WTC11 (cell line): ENCODE measurements at regions of chr2 and their contacts with region 1.

Region 1: DNA sequence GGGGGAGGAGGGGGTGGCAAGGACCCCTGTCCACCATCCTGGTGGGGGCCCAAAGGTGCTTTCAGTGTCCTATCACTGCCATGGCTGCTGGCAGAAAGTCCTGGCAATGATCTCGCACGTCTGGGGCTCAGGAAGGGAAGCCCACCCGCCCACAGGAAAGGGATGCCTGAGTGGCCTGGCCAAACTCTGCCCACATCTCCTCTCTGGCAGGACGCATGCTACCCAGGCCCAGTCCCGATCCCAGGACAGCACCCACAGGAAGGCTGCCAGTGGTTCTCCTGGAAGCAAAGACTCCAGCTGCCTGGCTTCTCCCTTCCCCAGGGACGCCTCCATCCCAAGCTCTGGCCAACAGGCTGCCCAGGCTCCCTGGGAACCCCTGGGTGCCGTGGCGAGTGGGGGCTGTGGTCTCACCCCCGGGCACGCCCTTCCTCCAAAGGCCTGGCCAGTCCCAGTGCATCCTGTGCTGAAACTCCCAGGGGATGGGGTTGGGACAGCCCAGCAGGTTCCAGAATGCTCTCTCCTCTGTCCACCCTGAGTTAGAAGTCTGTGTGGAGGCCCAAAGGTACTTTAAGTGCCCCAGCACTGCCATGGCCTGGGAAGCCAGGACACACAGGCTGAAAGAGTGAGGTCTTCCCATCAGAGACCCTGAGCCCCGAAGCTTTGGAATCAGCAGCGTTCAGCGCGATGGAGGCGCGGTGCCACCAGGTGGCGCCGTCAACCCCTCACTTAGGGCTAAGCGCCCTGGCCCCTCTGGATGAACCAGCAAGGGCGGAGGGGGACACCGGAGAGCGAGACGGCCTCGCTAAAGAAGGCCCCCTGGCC is 29.8 kb upstream of the TAF1B start:
- DNase-seq: peak; percentile 94
- ATAC-seq: peak; percentile 95
- H3K4me3 Mint-ChIP-seq: peak overlapping the region; percentile 31; the same call in 1 of the 2 replicates
- H3K27ac Mint-ChIP-seq: no peak overlapping the region
- H3K4me1 Mint-ChIP-seq: peaks cover 6% of the 10 kb centered on the region
- H3K27me3 Mint-ChIP-seq: 0 out of 2 replicates have a peak, but pooled peaks cover 4% of the 10 kb centered on the region
- CTCF ChIP-seq: peak; percentile 79

Region 2: DNA sequence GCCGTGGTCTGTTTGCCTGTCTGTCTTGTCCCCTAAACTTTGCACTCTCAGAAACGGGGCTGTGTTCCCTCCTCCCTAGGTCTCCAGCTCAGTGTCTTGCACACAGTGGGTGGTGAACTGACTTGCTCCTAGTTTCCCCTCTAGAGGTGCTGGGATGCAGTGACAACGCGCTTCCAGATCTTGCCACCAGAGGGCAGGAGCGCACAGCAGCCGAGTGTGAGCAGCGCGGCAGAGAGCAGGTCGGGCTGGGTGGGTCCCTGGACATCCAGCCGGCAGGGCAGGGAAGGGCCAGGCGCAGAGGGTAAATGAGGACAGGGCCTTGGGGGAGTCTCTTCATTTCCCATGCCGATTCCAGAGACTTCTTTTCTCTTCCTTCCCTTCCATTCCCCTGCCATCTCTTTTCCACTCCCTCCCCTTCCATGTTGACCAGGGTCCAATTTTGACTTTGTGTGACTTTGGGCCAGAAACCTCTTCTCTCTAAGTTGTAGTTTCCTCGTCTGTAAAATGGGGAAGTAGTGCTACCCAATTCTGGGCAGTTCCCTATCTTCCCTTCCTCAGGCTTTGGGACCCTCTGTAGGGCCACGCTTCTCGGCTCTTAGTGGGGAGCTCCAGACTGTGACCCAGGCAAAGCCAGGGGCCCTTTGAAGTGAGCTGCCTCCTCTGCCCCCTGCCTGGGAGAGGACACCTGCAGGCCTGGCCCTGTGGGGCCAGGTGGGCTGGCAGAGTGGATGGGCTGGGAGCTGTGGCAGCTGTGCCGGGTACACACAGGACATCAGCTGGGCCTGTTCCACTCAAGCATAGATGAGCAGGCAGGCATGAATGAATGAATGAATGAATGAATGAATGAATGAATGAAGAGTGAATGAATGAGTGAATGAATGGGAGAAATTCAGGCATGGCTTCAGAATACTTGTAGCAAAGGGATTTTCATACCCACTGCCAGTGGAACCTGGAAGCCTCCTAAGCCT is 13.6 kb before region 1 on chr2:
- CTCF ChIA-PET with region 1: interaction called, 56 read pairs
- POLR2A ChIA-PET with region 1: no interaction called
- DNase-seq: peak; percentile 96
- ATAC-seq: peak; percentile 90
- H3K4me3 Mint-ChIP-seq: no peak overlapping the region
- H3K27ac Mint-ChIP-seq: peak overlapping the region; percentile 88; the same call in 1 of the 2 replicates
- H3K4me1 Mint-ChIP-seq: peaks cover 19% of the 10 kb centered on the region
- H3K27me3 Mint-ChIP-seq: no peaks in the 10 kb centered on the region
- CTCF ChIP-seq: peak; percentile 83

Region 3: GRCh38 chr2:9843229-9844035 is 29.9 kb after region 1 on chr2 and contains the start of gene TAF1B:
- CTCF ChIA-PET with region 1: interaction called, 29 read pairs
- POLR2A ChIA-PET with region 1: no interaction called
- DNase-seq: peak; percentile 90
- ATAC-seq: peak; percentile 92
- H3K4me3 Mint-ChIP-seq: peak within 1 kb of the TSS; percentile 86
- H3K27ac Mint-ChIP-seq: peak within 1 kb of the TSS; percentile 96
- H3K4me1 Mint-ChIP-seq: peaks cover 19% of the 10 kb centered on the region
- H3K27me3 Mint-ChIP-seq: peaks cover 4% of the 10 kb centered on the region; the same call in 1 of the 2 replicates
- CTCF ChIP-seq: no peak
- total RNA-seq, gene TAF1B: 27.0 to 31.2 TPM (median 28.8 TPM) in 3 replicates

Region 4: DNA sequence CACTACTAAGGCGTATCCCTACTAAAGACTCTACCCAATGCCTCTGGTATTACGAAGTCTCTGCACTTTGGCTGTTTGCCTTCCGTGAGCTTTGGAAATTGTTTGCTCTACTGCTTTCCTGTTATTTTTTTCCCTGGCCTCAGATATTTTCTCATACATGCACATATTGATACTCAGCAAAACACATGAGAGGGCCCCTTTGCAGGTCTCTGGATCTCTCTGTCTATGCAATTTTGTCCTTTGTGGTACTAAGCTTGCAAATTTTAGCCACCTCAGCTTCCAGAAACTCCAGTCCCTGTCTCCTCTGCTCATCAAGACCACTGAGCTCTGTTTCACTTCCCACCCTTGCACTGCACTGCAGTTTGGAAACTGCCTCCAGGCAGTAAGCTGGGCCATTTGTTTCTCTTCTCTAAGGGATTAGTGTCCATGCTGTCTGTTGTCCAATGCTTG is 76.3 kb after region 1 on chr2:
- CTCF ChIA-PET with region 1: no interaction called
- POLR2A ChIA-PET with region 1: no interaction called
- DNase-seq: no peak
- ATAC-seq: no peak
- H3K4me3 Mint-ChIP-seq: no peak overlapping the region
- H3K27ac Mint-ChIP-seq: peak overlapping the region; percentile 25; the same call in 1 of the 2 replicates
- H3K4me1 Mint-ChIP-seq: peaks cover 8% of the 10 kb centered on the region; the same call in 1 of the 2 replicates
- H3K27me3 Mint-ChIP-seq: no peaks in the 10 kb centered on the region
- CTCF ChIP-seq: no peak

Region 5: GRCh38 chr2:10028988-10029874 is 215.7 kb after region 1 on chr2:
- CTCF ChIA-PET with region 1: interaction called, 21 read pairs
- POLR2A ChIA-PET with region 1: no interaction called
- DNase-seq: peak; percentile 52
- ATAC-seq: peak; percentile 69
- H3K4me3 Mint-ChIP-seq: no peak overlapping the region
- H3K27ac Mint-ChIP-seq: no peak overlapping the region
- H3K4me1 Mint-ChIP-seq: peaks cover 19% of the 10 kb centered on the region
- H3K27me3 Mint-ChIP-seq: no peaks in the 10 kb centered on the region
- CTCF ChIP-seq: no peak

Region 6: DNA sequence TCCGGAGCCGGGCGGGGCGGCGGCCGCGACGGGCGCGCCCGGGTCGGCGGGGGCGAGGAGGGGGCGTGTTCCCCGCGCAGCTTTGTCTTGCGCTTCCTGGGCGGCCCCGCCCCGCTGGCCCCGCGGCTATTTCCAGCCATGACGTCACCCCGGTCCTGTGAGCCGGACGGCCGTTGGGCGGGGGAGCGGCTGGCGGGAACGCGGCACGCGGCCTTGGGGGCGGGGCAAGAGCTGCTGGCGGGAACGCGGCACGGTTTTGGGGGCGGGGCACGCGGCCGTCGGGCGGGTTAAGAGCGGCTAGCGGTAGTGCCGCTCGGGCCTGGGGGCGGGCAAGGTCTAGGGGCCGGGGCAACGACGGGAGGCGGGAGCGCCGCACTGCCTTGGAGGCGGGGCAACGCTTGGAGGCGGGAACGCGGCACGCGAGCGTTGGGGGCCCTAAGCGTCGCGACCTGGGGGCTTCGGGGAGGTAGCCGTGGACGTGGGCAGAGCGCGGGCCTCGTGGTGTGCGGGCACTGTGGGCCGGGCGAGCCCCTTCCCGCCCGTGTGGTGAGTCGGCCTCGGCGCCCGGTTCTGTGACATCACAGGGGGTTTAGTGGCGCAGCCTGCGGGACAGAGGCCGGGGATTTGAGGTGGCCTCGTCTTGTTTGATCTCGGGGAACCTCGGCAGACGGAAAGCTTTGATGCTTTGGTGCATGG is 230.5 kb after region 1 on chr2:
- CTCF ChIA-PET with region 1: interaction called, 12 read pairs
- POLR2A ChIA-PET with region 1: no interaction called
- DNase-seq: peak; percentile 95
- ATAC-seq: peak; percentile 63
- H3K4me3 Mint-ChIP-seq: peak overlapping the region; percentile 49
- H3K27ac Mint-ChIP-seq: no peak overlapping the region
- H3K4me1 Mint-ChIP-seq: peaks cover 10% of the 10 kb centered on the region
- H3K27me3 Mint-ChIP-seq: peaks cover 38% of the 10 kb centered on the region
- CTCF ChIP-seq: no peak

Region 7: GRCh38 chr2:10057231-10058107 is 243.9 kb after region 1 on chr2:
- CTCF ChIA-PET with region 1: interaction called, 21 read pairs
- POLR2A ChIA-PET with region 1: no interaction called
- DNase-seq: peak; percentile 92
- ATAC-seq: peak; percentile 94
- H3K4me3 Mint-ChIP-seq: peak overlapping the region; percentile 85
- H3K27ac Mint-ChIP-seq: peak overlapping the region; percentile 98
- H3K4me1 Mint-ChIP-seq: peaks cover 28% of the 10 kb centered on the region
- H3K27me3 Mint-ChIP-seq: no peaks in the 10 kb centered on the region
- CTCF ChIP-seq: no peak